ENCODE measurements at regions of chr17 and their contacts with region 1.

Region 1: DNA sequence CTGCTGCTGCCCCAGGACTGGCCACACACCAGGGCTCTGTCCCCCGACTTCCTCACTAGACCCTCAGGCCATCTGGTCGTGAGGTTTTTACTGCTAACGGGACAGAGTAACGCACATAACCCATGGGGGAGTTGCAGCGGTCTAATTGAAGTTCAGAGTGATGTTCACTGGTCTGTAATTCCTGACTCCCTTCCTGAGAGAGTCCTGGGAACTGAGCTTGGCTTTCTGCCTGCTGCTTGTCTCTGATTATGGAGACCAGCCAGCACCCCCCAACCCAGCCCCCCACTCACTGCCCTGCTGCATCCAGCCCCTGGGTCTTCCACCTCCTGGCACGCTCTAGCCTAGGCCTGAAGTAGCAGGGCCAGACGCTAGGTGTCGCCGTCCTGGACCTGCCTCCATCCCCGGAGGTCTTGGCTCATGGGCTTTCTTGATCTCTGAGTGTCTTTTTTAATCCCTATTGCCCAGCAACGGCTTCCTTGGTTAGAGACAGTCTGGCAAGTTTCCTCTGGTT is 192.9 kb downstream of the CCDC182 start:
- DNase-seq: peak; percentile 84
- H3K4me3 ChIP-seq: no peak overlapping the region
- H3K27ac ChIP-seq: peak overlapping the region in 1 of 2 experiments; percentile 99; a peak in 2 of 4 replicates
- H3K4me1 ChIP-seq: peaks cover 6 to 86% of the 10 kb centered on the region in 2 experiments; a peak in 2 of 4 replicates
- H3K27me3 ChIP-seq: no peaks in the 10 kb centered on the region
- CTCF ChIP-seq: peak; percentile 52
- EP300 ChIP-seq: peak in 1 of 2 experiments; percentile 61; a peak in 1 of 4 replicates
- RAD21 ChIP-seq: peak; percentile 65

Region 2: DNA sequence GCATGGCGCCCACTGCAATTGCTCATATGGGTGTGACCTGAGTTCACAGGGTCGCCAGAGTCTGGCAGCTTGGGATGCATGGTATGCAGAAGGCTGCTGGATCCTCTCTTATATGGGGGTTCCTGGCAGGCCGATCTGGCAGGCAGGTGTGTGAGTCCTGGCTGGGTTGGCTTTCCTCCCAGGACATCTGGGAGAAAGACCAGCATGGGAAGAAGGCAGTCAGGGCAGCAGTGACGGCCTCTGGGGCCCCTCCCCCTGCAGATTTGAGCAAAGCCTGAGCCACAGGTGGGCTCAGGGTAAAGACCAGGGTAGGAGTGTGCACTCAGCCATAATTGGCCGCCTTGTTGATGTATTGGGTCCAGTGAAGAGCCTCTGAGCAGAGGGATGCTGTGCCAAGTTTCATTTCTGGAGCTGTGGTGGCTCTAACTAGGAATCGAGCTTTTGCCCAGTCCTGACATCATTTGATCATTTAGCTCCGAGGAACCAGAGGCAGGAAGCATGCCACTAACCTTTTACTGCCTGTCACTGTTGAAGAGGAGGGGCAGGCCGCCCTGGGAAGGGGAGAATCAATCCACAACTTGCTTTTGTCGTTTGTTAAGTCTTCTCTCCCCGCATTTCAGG is 18.7 kb after region 1 on chr17:
- CTCF ChIA-PET with region 1: interaction called, 16 read pairs
- POLR2A ChIA-PET with region 1: interaction called, 6 read pairs
- DNase-seq: no peak
- H3K4me3 ChIP-seq: no peak overlapping the region
- H3K27ac ChIP-seq: peak overlapping the region in 1 of 2 experiments; percentile 100; a peak in 2 of 4 replicates
- H3K4me1 ChIP-seq: peaks cover 0 to 87% of the 10 kb centered on the region in 2 experiments; a peak in 2 of 4 replicates
- H3K27me3 ChIP-seq: no peaks in the 10 kb centered on the region
- CTCF ChIP-seq: no peak
- EP300 ChIP-seq: peak in 1 of 2 experiments; percentile 41; a peak in 1 of 4 replicates
- RAD21 ChIP-seq: peak; percentile 5; the same call in 1 of the 2 replicates

Region 3: DNA sequence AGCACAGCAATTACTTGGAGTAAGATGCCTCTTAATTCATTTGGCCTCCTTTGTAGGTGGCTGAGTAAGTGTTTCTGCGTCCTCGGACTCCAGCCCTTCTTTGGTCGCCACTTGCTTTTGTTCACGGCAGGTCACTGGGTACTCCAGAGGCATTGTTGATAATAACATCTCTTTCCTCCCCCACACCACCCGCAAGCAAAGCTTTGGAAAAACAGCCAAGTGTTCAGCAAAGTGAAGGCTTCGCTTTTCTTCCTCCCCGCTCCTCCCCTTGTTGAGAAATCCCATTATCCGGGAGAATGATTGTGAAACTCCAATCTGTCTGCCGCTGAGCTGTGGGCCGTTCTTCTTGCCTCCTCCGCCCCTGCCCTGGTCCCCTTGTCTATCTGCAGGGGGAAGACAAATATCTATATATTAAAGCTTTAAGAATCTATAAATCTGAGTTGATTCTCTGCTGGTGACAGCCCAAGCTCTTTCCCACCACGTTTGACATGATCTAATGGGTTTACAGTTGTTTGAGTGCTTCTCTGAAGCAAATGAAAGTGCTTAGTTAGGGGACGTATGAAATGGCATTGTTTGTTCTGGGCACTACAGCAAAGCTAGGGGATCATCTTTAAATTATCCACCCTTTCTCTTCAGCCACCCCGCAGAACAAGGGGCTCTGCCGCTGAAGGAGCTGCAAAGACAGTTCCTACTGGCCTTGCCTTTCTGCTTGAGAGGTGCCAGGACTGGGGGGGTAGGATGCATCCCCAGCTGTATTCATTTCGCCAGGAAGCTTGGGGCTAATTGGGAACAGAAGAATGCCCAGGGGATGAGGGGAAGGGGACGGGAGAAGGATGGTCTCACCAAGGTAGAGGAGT is 25.8 kb after region 1 on chr17:
- CTCF ChIA-PET with region 1: interaction called, 12 read pairs
- POLR2A ChIA-PET with region 1: interaction called, 8 read pairs
- DNase-seq: peak; percentile 47
- H3K4me3 ChIP-seq: no peak overlapping the region
- H3K27ac ChIP-seq: peak overlapping the region in 1 of 2 experiments; percentile 84; a peak in 2 of 4 replicates
- H3K4me1 ChIP-seq: peaks cover 0 to 66% of the 10 kb centered on the region in 2 experiments; a peak in 3 of 4 replicates
- H3K27me3 ChIP-seq: no peaks in the 10 kb centered on the region
- CTCF ChIP-seq: no peak
- EP300 ChIP-seq: no peak
- RAD21 ChIP-seq: no peak

Region 4: GRCh38 chr17:57604771-57605674 is 52.9 kb after region 1 on chr17:
- CTCF ChIA-PET with region 1: interaction called, 83 read pairs
- POLR2A ChIA-PET with region 1: no interaction called
- DNase-seq: peak; percentile 89
- H3K4me3 ChIP-seq: peak overlapping the region in 1 of 2 experiments; percentile 18; a peak in 1 of 4 replicates
- H3K27ac ChIP-seq: peak overlapping the region; percentile 59 to 99; a peak in 3 of 4 replicates
- H3K4me1 ChIP-seq: peaks cover 26 to 90% of the 10 kb centered on the region in 2 experiments
- H3K27me3 ChIP-seq: no peaks in the 10 kb centered on the region
- CTCF ChIP-seq: no peak; the same call in 1 of the 2 replicates
- EP300 ChIP-seq: peak in 1 of 2 experiments; percentile 51; a peak in 2 of 4 replicates
- RAD21 ChIP-seq: peak; percentile 56

Measured in SK-N-SH (cell line).